ENCODE measurements at regions of chr19 and their contacts with region 1.

Region 1: GRCh38 chr19:11405846-11406643 is 13.1 kb downstream of the RGL3 start:
- DNase-seq: peak; percentile 24
- H3K4me3 ChIP-seq: peak overlapping the region in 1 of 3 experiments; percentile 20
- H3K27ac ChIP-seq: no peak overlapping the region
- H3K4me1 ChIP-seq: peaks cover 4% of the 10 kb centered on the region
- H3K27me3 ChIP-seq: no peaks in the 10 kb centered on the region
- CTCF ChIP-seq: peak; percentile 21 to 63

Region 2: GRCh38 chr19:11446652-11447301 is 40.7 kb after region 1 on chr19:
- CTCF ChIA-PET with region 1: no interaction called
- dilution Hi-C with region 1: loop called (anchors 5 kb)
- in situ Hi-C with region 1: no loop called
- intact Hi-C with region 1: no loop called
- DNase-seq: no peak
- H3K4me3 ChIP-seq: no peak overlapping the region
- H3K27ac ChIP-seq: no peak overlapping the region
- H3K4me1 ChIP-seq: peaks cover 16% of the 10 kb centered on the region
- H3K27me3 ChIP-seq: no peaks in the 10 kb centered on the region
- CTCF ChIP-seq: peak; percentile 51 to 75

Region 3: DNA sequence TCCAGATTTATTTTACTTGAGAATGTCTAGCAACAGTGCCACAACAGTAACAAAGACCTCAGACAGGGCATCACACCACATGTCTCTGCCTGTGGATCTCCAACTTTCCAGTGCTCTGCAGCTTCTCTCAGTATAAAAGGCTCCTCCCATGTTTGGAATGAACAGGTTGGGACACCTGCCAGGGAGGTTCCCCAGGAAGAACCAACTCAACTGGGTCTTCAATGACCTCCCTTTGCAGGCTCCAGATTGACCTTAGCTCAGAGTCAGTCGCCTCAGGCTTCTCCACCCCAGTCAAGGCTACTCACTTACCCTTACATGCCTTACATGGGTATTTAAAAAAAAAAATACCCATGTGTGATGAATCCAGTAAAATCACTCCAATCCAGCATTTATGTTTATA is 329.4 kb after region 1 on chr19:
- CTCF ChIA-PET with region 1: no interaction called
- dilution Hi-C with region 1: no loop called
- in situ Hi-C with region 1: no loop called
- intact Hi-C with region 1: no loop called
- DNase-seq: peak; percentile 32
- H3K4me3 ChIP-seq: no peak overlapping the region
- H3K27ac ChIP-seq: no peak overlapping the region
- H3K4me1 ChIP-seq: peaks cover 20% of the 10 kb centered on the region
- H3K27me3 ChIP-seq: no peaks in the 10 kb centered on the region
- CTCF ChIP-seq: no peak